ENCODE measurements at regions of chr14 and their contacts with region 1.

Region 1: DNA sequence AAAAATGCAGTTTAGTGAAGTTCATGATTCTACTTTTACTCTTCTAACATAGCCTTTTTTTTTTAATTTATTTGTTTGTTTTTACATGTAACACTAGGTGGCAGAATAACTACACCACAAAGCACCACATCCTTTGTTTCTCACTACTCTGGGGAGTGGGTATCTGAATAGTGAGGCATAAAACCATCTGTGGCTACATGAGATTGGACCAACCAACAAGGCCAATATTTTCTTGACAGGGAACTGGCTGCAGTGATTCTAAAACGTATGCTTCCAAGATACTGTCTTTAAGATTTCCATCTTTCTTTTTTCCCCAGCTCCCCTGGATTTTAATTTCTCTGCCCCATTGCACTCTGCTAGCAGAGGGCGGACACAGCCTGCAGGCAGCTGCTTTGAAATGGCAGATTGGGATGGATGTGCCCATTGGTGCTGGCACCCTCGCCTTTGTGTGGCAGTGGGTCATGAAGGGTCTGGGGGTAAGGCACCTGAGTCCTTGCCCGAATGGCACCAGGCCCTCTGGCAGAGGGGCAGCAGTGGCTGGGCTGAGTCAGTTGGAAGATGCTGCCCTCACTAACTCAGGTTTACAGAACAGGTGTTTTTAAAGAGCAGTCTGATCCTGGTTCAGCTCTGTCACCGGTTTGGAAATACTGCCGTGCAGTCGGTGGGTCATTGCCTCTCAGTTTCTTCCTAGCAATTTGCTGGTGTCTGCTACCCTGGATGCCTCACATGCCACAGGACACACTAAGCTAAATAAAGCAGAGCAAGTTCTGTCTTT is 429.1 kb downstream of the RAD51B start:
- DNase-seq: peak in 3 of 5 donors; percentile 32 to 66 (median 39)
- ATAC-seq: peak; percentile 56 to 75 (median 70)
- H3K4me3 ChIP-seq: no peak overlapping the region
- H3K27ac ChIP-seq: peak overlapping the region in 11 of 12 donors; percentile 23 to 91 (median 85)
- H3K4me1 ChIP-seq: peaks cover 17 to 84% (median 78%) of the 10 kb centered on the region in 12 donors
- H3K27me3 ChIP-seq: no peaks in the 10 kb centered on the region
- CTCF ChIP-seq: peak; percentile 54 to 80 (median 68)
- POLR2A ChIP-seq: no peak

Region 2: GRCh38 chr14:68140111-68140741 is 108.4 kb before region 1 on chr14:
- intact Hi-C with region 1: loop called in 3 of 10 experiments (anchors 1 to 5 kb)
- DNase-seq: peak in 4 of 5 donors; percentile 24 to 61 (median 42)
- ATAC-seq: peak in 3 of 4 donors; percentile 48 to 73 (median 56)
- H3K4me3 ChIP-seq: no peak overlapping the region
- H3K27ac ChIP-seq: peak overlapping the region in 11 of 12 donors; percentile 35 to 89 (median 53)
- H3K4me1 ChIP-seq: peaks cover 3 to 71% (median 35%) of the 10 kb centered on the region in 12 donors
- H3K27me3 ChIP-seq: no peaks in the 10 kb centered on the region
- CTCF ChIP-seq: no peak
- POLR2A ChIP-seq: peak in 1 of 2 donors; percentile 32

Region 3: DNA sequence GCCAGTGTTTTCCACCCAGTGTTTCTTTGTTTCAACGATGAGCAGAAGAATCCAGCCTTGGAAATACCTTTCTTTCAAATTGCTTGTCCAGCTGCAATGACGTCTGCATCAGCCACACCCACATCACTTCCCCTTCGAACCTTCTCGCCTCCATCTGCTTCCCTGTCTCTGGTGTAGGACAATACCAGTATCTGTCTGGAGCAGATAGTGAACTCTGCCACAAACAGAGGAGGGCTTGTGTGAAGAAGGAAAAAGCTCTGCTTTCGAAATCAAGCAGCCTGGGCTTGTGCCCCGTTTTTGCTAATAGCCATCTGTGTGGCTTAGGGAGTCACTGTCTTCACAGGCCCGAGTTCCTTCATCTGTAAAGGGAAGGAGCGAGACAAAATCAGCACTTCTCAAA is 128.8 kb after region 1 on chr14:
- intact Hi-C with region 1: loop called in 1 of 10 experiments (anchors 10 kb)
- DNase-seq: peak; percentile 56 to 80 (median 74)
- ATAC-seq: peak; percentile 68 to 95 (median 92)
- H3K4me3 ChIP-seq: no peak overlapping the region
- H3K27ac ChIP-seq: peak overlapping the region; percentile 33 to 88 (median 77)
- H3K4me1 ChIP-seq: peaks cover 0 to 77% (median 23%) of the 10 kb centered on the region in 12 donors
- H3K27me3 ChIP-seq: no peaks in the 10 kb centered on the region
- CTCF ChIP-seq: no peak
- POLR2A ChIP-seq: no peak

Region 4: GRCh38 chr14:68444449-68445168 is 195.9 kb after region 1 on chr14:
- intact Hi-C with region 1: no loop called
- DNase-seq: peak in 4 of 5 donors; percentile 31 to 60 (median 41)
- ATAC-seq: peak in 2 of 4 donors; percentile 68 to 70
- H3K4me3 ChIP-seq: no peak overlapping the region
- H3K27ac ChIP-seq: no peak overlapping the region
- H3K4me1 ChIP-seq: peaks cover 0 to 33% (median 9%) of the 10 kb centered on the region in 12 donors
- H3K27me3 ChIP-seq: no peaks in the 10 kb centered on the region
- CTCF ChIP-seq: no peak
- POLR2A ChIP-seq: no peak

Region 5: GRCh38 chr14:68506021-68506644 is 257.5 kb after region 1 on chr14:
- intact Hi-C with region 1: loop called in 1 of 10 experiments (anchors 10 kb)
- DNase-seq: peak in 2 of 5 donors; percentile 28 to 55
- ATAC-seq: peak in 2 of 4 donors; percentile 18 to 50
- H3K4me3 ChIP-seq: no peak overlapping the region
- H3K27ac ChIP-seq: peak overlapping the region in 9 of 12 donors; percentile 4 to 62 (median 29)
- H3K4me1 ChIP-seq: peaks cover 0 to 44% (median 31%) of the 10 kb centered on the region in 12 donors
- H3K27me3 ChIP-seq: no peaks in the 10 kb centered on the region
- CTCF ChIP-seq: no peak
- POLR2A ChIP-seq: no peak

Region 6: DNA sequence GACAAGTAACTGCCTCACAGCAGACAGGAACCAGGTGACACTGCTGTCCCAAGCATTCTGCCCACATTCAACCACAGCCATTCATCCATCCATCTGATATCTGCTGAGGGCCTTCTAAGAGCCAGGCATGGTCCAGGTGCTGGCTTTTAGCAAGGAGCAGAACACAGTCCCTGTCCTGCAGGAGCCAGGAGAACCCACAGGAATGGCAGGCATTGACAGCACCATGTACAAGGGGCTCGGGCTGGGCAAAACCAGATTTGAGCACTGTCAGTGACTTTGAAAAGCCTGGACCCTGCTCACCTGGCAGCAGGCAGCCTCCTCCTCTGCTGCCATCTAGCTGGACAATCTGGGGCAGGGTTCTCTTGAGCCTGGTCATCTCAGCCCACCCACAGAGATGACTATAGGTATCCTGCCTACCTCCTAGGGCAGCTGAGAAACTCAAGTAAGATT is 407.3 kb after region 1 on chr14:
- intact Hi-C with region 1: loop called in 1 of 10 experiments (anchors 5 kb)
- DNase-seq: no peak
- ATAC-seq: peak in 1 of 4 donors; percentile 26
- H3K4me3 ChIP-seq: no peak overlapping the region
- H3K27ac ChIP-seq: peak overlapping the region in 1 of 12 donors; percentile 85
- H3K4me1 ChIP-seq: peaks cover 0 to 59% (median 31%) of the 10 kb centered on the region in 12 donors
- H3K27me3 ChIP-seq: no peaks in the 10 kb centered on the region
- CTCF ChIP-seq: peak in 11 of 12 donors; percentile 5 to 33 (median 19)
- POLR2A ChIP-seq: no peak

Region 7: GRCh38 chr14:68669087-68669511 is 420.4 kb after region 1 on chr14:
- intact Hi-C with region 1: no loop called
- DNase-seq: no peak
- ATAC-seq: no peak
- H3K4me3 ChIP-seq: no peak overlapping the region
- H3K27ac ChIP-seq: peak overlapping the region in 10 of 12 donors; percentile 15 to 75 (median 60)
- H3K4me1 ChIP-seq: peaks cover 11 to 81% (median 68%) of the 10 kb centered on the region in 12 donors
- H3K27me3 ChIP-seq: no peaks in the 10 kb centered on the region
- CTCF ChIP-seq: no peak
- POLR2A ChIP-seq: no peak

Region 8: GRCh38 chr14:68795597-68796417 is 547.1 kb after region 1 on chr14:
- intact Hi-C with region 1: loop called in 7 of 10 experiments (anchors 1 to 5 kb)
- DNase-seq: peak; percentile 87 to 92 (median 90)
- ATAC-seq: peak; percentile 24 to 72 (median 48)
- H3K4me3 ChIP-seq: peak overlapping the region; percentile 60 to 94 (median 84)
- H3K27ac ChIP-seq: peak overlapping the region; percentile 98 to 100 (median 99)
- H3K4me1 ChIP-seq: peaks cover 0 to 17% (median 9%) of the 10 kb centered on the region in 12 donors
- H3K27me3 ChIP-seq: no peaks in the 10 kb centered on the region
- CTCF ChIP-seq: peak; percentile 47 to 88 (median 76)
- POLR2A ChIP-seq: peak in 1 of 2 donors; percentile 88